ENCODE measurements at regions of chr9 and their contacts with region 1.

Region 1: DNA sequence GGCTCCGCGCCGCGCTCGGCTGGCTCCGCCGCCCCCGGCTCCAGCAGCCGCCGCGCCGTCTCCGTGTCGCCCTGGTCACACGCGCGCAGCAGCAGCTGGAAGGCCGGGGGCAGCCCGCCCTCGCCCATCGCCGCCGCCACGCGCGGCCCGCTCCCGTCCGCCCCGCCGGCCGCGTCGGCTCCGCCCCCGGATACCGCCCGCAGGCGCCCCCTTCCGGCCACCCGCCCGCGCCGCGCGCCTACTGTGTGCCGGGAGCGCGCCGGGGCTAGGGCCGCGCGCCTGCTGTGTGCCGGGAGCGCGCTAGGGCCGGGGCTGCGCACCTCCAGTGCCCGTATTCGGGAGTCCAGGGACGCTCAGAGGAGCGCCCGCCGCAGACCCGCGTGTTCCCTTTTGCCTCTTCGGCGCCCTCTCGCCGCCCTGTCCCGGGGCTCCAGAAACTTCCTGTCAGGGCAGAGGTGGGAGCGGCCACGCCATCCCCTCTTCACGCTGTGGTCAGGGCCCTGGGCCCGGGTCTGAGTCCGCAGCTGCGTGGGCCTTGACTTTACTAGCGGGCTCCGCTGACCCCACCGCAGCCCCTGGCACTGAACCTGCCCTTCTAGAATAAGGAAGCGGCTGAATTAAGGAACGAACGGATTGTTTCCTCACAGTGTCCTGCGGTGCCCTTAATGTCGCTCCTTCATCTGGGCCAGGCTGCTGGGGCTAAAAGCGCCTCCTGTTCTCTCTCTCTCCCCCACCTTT is at the start of gene ANKS6:
- DNase-seq: no peak
- H3K4me3 ChIP-seq: peak within 1 kb of the TSS; percentile 67
- CTCF ChIP-seq: peak; percentile 57

Region 2: GRCh38 chr9:98807070-98807810 is 10.7 kb after region 1 on chr9 and contains the start of gene GALNT12:
- CTCF ChIA-PET with region 1: interaction called, 116 read pairs
- POLR2A ChIA-PET with region 1: no interaction called
- DNase-seq: no peak
- H3K4me3 ChIP-seq: peak within 1 kb of the TSS; percentile 50
- CTCF ChIP-seq: no peak

Measured in AG04449 (cell line).